SK-N-SH (cell line): ENCODE measurements at regions of chr1 and their contacts with region 1.

Region 1: DNA sequence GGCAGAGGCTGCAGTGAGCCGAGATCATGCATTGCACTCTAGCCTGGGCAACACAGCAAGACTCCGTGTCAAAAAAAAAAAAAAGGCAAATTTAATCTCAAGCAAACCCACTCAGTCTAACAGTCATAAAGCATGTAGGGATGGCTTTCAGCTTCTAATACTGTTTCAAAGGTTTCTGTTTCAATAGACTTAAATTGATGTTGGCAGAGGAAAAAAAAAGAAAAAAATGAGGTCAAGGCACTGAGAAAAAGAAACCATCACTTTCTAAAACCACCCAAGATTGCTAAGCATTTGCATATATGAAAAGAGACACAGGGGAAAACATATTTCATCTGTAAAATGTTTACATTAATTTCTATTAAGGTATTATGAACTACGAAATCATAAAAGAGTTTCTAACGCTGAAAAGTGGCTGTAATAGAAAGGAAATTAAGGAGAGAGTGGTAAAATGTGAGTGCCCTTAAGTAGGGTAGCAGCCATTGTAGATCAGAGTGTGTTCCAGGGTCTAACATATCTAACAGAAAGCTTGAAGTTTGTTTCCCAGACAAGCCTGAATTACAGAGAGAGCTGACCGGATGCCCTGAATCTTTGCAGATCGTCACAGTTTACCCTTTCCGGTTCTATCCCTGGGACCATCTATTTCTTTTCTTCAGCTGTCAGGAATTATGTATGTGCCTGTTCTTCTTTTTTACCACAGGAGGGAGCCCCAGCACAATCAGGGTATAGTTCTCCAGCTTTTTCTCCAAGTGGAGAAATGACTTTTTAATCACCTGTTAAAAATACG is 70.0 kb downstream of the PLD5 start:
- DNase-seq: peak; percentile 67
- H3K4me3 ChIP-seq: peak overlapping the region in 1 of 2 experiments; percentile 28; a peak in 1 of 4 replicates
- H3K27ac ChIP-seq: peak overlapping the region in 1 of 2 experiments; percentile 70; a peak in 2 of 4 replicates
- H3K4me1 ChIP-seq: peaks cover 0 to 7% of the 10 kb centered on the region in 2 experiments; a peak in 2 of 4 replicates
- H3K27me3 ChIP-seq: no peaks in the 10 kb centered on the region
- CTCF ChIP-seq: peak; percentile 61
- EP300 ChIP-seq: no peak
- RAD21 ChIP-seq: peak; percentile 82

Region 2: GRCh38 chr1:242428399-242429190 is 25.9 kb before region 1 on chr1:
- CTCF ChIA-PET with region 1: interaction called, 15 read pairs
- POLR2A ChIA-PET with region 1: interaction called, 19 read pairs
- DNase-seq: peak; percentile 29
- H3K4me3 ChIP-seq: no peak overlapping the region
- H3K27ac ChIP-seq: peak overlapping the region; percentile 14 to 100; a peak in 3 of 4 replicates
- H3K4me1 ChIP-seq: peaks cover 0 to 29% of the 10 kb centered on the region in 2 experiments; a peak in 2 of 4 replicates
- H3K27me3 ChIP-seq: no peaks in the 10 kb centered on the region
- CTCF ChIP-seq: no peak
- EP300 ChIP-seq: peak in 1 of 2 experiments; percentile 95; a peak in 2 of 4 replicates
- RAD21 ChIP-seq: peak; percentile 22

Region 3: GRCh38 chr1:242440757-242441156 is 13.7 kb before region 1 on chr1:
- CTCF ChIA-PET with region 1: interaction called, 30 read pairs
- POLR2A ChIA-PET with region 1: interaction called, 6 read pairs
- DNase-seq: no peak
- H3K4me3 ChIP-seq: no peak overlapping the region
- H3K27ac ChIP-seq: no peak overlapping the region
- H3K4me1 ChIP-seq: peaks cover 0 to 9% of the 10 kb centered on the region in 2 experiments; a peak in 2 of 4 replicates
- H3K27me3 ChIP-seq: no peaks in the 10 kb centered on the region
- CTCF ChIP-seq: no peak
- EP300 ChIP-seq: no peak
- RAD21 ChIP-seq: no peak

Region 4: DNA sequence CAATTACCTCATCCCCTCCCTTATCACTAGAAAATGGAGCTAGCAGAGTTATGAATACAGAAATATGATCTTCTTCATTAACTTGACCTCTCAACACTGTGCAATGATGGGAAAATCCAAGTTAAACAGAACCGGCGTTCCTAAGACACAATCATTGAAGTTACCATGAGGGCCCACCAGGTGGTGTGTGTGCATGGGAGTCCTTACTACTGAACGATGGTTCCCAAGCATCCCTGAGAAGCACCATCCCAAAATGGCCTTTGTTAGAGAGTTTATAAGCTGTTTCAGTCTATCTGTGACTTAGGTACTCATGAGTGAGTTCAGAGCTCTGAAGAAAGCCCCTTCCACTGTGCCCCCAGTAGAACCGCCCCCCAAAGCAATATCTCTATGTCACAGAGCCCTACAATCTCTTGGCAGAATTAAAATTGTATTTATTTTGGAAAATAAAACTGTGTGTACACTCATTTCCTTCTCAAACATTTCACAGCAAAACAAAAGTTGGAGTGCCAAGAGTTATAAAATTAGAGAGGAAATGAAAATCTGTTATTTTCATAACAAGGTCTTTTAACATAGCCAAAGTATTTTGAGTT is 13.2 kb after region 1 on chr1:
- CTCF ChIA-PET with region 1: interaction called, 22 read pairs
- POLR2A ChIA-PET with region 1: no interaction called
- DNase-seq: peak; percentile 79
- H3K4me3 ChIP-seq: no peak overlapping the region
- H3K27ac ChIP-seq: peak overlapping the region in 1 of 2 experiments; percentile 39; a peak in 1 of 4 replicates
- H3K4me1 ChIP-seq: peaks cover 0 to 3% of the 10 kb centered on the region in 2 experiments; a peak in 1 of 4 replicates
- H3K27me3 ChIP-seq: no peaks in the 10 kb centered on the region
- CTCF ChIP-seq: peak; percentile 57
- EP300 ChIP-seq: no peak
- RAD21 ChIP-seq: peak; percentile 88

Region 5: GRCh38 chr1:242554577-242554976 is 100.1 kb after region 1 on chr1:
- CTCF ChIA-PET with region 1: no interaction called
- POLR2A ChIA-PET with region 1: no interaction called
- DNase-seq: no peak
- H3K4me3 ChIP-seq: no peak overlapping the region
- H3K27ac ChIP-seq: no peak overlapping the region
- H3K4me1 ChIP-seq: no peaks in the 10 kb centered on the region
- H3K27me3 ChIP-seq: no peaks in the 10 kb centered on the region
- CTCF ChIP-seq: no peak
- EP300 ChIP-seq: no peak
- RAD21 ChIP-seq: no peak